Heart right ventricle (tissue), 16 donors: ENCODE measurements at regions of chr1 and their contacts with region 1.

Region 1: GRCh38 chr1:59323879-59324278 is 27.0 kb downstream of the FGGY start:
- DNase-seq: no peak
- ATAC-seq: no peak
- H3K4me3 ChIP-seq: no peak overlapping the region
- H3K27ac ChIP-seq: no peak overlapping the region
- H3K4me1 ChIP-seq: peaks cover 0 to 2% (median 0%) of the 10 kb centered on the region in 9 donors
- H3K27me3 ChIP-seq: no peaks in the 10 kb centered on the region
- CTCF ChIP-seq: no peak

Region 2: DNA sequence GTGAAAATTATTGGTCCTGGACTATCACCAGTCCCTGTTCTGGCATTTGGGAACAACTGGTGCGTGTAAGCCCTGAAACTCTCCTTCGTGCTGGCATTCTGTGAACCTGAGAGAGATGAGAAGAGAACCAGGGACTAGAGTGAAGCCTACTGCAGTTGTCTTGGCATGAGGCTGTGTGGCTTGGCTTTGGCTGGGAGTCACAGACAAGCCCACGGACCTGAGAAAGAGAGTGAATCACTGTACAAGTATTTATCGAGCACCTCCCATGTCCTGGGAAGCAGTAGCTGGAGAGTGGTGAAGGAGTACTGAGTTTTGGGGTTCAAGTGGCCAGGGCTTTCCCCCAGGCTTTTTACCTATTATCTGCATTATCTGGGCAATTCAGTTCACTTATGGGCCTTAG is 36.3 kb after region 1 on chr1:
- intact Hi-C with region 1: loop called in 1 of 10 experiments (anchors 5 kb)
- DNase-seq: no peak
- ATAC-seq: peak in 4 of 8 donors; percentile 15 to 44 (median 37)
- H3K4me3 ChIP-seq: no peak overlapping the region
- H3K27ac ChIP-seq: no peak overlapping the region
- H3K4me1 ChIP-seq: peaks cover 0 to 17% (median 5%) of the 10 kb centered on the region in 9 donors
- H3K27me3 ChIP-seq: no peaks in the 10 kb centered on the region
- CTCF ChIP-seq: no peak

Region 3: DNA sequence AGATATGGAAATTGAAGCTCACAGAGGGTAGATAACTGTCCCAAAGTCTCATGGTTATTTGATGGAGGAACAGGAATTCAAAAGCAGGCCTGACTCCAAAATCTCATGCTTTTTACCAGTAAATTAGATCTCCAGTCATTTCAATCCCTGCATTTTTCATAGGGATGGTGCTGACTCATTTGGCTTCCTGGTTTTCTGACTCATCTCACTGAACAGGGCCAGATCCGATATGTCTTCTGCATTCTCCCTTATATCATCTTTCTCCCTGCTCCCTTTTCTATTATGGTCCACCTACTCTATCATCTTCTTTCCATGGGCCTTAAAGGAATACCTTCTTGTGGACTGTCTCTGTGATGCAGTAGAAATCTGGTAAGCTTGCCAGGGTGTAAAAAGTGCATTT is 160.2 kb after region 1 on chr1:
- intact Hi-C with region 1: no loop called
- DNase-seq: peak in 1 of 2 donors; percentile 14
- ATAC-seq: peak in 4 of 8 donors; percentile 41 to 78 (median 46)
- H3K4me3 ChIP-seq: no peak overlapping the region
- H3K27ac ChIP-seq: peak overlapping the region in 1 of 10 donors; percentile 69
- H3K4me1 ChIP-seq: peaks cover 0 to 39% (median 7%) of the 10 kb centered on the region in 9 donors
- H3K27me3 ChIP-seq: no peaks in the 10 kb centered on the region
- CTCF ChIP-seq: no peak